Breast epithelium (tissue), 4 donors: ENCODE measurements at regions of chr4 and their contacts with region 1.

Region 1: DNA sequence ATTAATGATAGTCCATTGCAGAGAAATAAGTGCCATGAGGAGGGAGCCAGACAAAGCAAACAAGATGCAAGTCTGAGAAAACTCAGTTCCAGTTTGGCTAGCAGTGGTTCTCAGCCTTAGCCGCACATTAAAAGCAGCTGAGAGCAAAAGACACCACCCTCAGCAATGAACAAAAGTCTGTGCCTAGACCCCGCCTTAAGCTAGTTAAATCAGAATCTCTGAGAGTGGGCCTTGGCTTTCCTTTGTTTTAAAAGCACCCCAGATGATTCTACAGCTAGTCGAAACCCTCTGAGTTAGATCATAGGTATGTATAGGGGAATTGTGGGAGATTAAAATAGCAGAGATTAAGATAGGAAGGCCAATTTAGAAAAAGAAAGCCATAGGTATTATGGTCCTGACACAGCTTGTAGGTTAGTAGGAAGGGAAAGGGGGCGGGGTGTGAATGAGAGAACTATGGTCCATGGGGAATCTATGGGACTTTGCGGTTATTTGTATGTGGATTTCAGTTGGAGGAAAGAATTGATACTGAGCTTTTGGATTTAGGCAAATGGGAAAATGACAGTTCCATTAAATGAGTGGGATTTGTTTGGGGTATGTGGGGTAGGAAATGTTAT is 12.0 kb downstream of the SPRY1 start:
- DNase-seq: no peak
- H3K4me3 ChIP-seq: no peak overlapping the region
- H3K27ac ChIP-seq: peak overlapping the region; percentile 59 to 65
- H3K4me1 ChIP-seq: peaks cover 0 to 6% of the 10 kb centered on the region in 2 donors
- H3K27me3 ChIP-seq: no peaks in the 10 kb centered on the region
- CTCF ChIP-seq: no peak
- POLR2A ChIP-seq: no peak

Region 2: DNA sequence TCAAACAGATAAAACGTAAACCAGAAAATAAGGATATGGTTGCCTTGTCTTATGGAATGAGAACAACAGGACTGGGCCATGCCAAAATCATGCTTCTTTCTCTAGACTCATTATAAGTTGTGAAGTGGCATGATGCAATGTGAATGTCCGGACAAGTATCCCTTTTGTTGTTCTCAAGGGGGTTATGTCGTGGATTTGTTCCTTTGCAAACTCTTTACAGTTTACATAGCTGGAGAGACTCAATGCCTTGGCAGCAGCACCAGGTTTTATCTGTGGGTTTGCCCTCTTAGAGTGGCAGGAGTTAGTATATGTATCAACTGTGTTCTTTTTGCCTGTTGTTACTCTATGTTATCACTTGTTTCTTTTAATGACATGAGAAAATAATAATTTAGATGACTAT is 29.5 kb after region 1 on chr4:
- intact Hi-C with region 1: no loop called
- DNase-seq: no peak
- H3K4me3 ChIP-seq: no peak overlapping the region
- H3K27ac ChIP-seq: peak overlapping the region in 1 of 2 donors; percentile 13
- H3K4me1 ChIP-seq: no peaks in the 10 kb centered on the region
- H3K27me3 ChIP-seq: no peaks in the 10 kb centered on the region
- CTCF ChIP-seq: no peak
- POLR2A ChIP-seq: no peak

Region 3: GRCh38 chr4:123449780-123450179 is 41.2 kb after region 1 on chr4:
- intact Hi-C with region 1: no loop called
- DNase-seq: no peak
- H3K4me3 ChIP-seq: no peak overlapping the region
- H3K27ac ChIP-seq: no peak overlapping the region
- H3K4me1 ChIP-seq: no peaks in the 10 kb centered on the region
- H3K27me3 ChIP-seq: no peaks in the 10 kb centered on the region
- CTCF ChIP-seq: no peak
- POLR2A ChIP-seq: no peak

Region 4: DNA sequence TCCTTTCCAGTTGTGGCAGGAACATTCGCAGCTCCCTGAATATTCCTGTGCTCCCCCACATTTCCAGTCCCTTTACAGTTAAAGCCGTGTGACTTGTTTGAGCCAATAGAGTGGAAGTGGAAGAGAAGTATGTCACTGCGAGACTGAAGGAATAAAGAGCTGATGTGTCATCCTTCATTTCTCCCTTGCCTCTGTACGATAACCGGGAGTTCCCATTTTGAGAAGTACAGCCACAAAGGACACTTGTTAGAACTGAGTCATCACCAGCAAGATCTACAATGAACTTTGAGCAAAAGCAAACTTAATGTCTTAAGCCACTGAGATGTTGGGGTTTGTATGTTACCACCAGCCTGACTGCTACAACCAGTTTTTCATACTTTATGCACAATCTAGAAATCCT is 80.3 kb after region 1 on chr4:
- intact Hi-C with region 1: loop called (anchors 5 kb)
- DNase-seq: no peak
- H3K4me3 ChIP-seq: no peak overlapping the region
- H3K27ac ChIP-seq: no peak overlapping the region
- H3K4me1 ChIP-seq: no peaks in the 10 kb centered on the region
- H3K27me3 ChIP-seq: no peaks in the 10 kb centered on the region
- CTCF ChIP-seq: no peak
- POLR2A ChIP-seq: no peak